ENCODE measurements at regions of chr16 and their contacts with region 1.

Region 1: DNA sequence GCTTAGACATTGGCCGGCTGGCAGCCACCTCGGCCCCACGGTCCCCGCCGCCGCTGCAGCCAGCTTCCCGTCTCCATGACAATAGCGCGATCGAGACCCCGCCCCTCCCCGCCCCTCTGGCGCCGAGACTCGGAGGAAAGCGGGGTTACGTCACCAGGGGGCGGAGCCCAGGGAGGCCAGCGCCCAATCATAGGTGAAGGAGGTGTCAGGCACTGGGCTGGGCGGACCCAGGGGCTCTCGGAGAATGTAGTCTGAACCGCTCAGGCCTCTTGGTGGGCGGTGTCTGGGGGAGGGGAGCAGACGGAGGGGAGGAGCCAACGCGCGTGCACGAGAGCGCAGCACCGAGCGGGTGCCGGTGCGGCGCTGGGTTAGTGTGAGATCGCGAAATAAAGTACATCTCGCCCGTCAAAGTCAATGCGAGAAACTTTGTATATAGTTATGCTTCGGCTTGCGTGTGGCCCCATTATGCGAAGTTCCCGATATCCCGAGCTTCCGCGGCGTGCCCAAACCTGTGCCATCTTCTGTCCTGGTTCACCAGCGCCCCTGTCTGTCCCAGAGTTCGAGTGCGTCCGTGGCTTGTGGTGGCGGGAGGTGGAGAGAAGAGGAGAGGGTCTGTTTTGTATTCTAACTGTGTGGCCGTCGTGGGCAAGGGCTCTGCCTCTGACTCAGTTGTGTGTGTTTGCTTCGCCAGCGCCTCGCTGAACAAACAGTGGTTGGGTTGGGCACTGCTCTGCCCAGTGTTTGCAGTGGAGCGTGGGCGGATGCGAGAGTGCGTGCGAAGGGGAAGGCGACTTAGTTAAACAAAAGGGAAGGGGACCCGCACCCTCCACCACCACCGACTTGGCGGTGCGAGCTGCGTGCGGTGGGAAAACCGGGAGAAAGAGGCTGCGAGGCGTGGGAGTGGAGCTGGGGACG is 1.3 kb upstream of the IRX5 start:
- DNase-seq: peak; percentile 88 to 98 (median 97)
- H3K4me3 ChIP-seq: peak overlapping the region; percentile 32 to 77 (median 61)
- H3K27ac ChIP-seq: peak overlapping the region in 11 of 59 donors; percentile 7 to 67 (median 37)
- H3K27me3 ChIP-seq: peaks cover 17 to 99% (median 89%) of the 10 kb centered on the region in 45 donors
- CTCF ChIP-seq: peak in 16 of 56 donors; percentile 3 to 48 (median 12)

Region 2: GRCh38 chr16:53773150-53773846 is 1156.0 kb before region 1 on chr16:
- intact Hi-C with region 1: loop called in 1 of 2 experiments (anchors 10 kb)
- DNase-seq: peak in 2 of 10 donors; percentile 18 to 34
- H3K4me3 ChIP-seq: no peak overlapping the region
- H3K27ac ChIP-seq: peak overlapping the region in 1 of 59 donors; percentile 20
- H3K27me3 ChIP-seq: no peaks in the 10 kb centered on the region
- CTCF ChIP-seq: peak; percentile 19 to 86 (median 66)

Region 3: GRCh38 chr16:53892155-53892554 is 1037.2 kb before region 1 on chr16:
- intact Hi-C with region 1: loop called in 1 of 2 experiments (anchors 10 kb)
- DNase-seq: peak in 7 of 10 donors; percentile 30 to 71 (median 48)
- H3K4me3 ChIP-seq: no peak overlapping the region
- H3K27ac ChIP-seq: no peak overlapping the region
- H3K27me3 ChIP-seq: no peaks in the 10 kb centered on the region
- CTCF ChIP-seq: peak; percentile 68 to 91 (median 82)

Region 4: DNA sequence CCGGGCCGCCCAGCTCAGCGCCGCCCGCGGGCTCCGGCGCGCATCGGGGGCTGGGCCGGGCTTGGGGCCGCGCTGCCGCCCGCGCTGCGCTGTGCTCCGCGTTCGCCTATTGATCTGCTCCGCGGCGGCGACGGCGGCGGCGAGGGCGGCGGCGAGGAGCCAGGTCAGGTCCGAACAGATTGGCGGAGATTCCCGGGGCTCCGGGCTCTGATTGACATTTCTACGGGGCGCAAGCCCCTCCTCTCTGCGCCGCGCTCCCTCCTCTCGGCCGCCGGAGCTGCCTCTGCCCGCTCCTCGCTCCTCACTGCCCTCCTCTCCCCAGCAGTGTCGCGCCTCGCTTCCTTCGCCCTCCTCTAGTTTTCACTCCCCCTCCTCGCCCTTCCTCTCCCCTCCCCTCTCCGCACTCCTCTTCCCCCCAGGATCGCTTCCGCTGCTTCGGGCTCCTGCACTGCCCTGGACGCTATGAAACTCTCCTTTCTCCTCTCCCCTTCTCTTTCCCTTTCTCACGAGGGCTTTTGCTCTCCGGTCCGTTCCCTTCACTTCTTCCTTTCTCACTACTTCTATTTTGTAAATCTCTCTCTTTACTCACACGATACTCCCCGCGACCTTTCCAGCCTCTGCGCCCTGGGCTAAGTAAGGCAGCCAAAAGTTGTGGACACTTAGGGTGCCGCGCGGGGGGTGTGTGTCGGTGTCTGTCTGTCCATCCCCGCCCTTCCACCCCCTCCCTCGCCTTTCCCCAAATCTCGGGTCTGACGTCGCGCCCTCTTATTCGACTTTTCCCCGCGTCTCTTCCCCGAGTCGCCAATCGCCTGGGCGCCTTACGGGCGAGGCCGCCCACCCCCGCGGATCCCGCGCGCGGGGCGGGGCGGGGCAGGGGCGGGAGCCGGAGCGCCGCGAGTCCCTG is 643.0 kb before region 1 on chr16 and contains the start of gene IRX3:
- intact Hi-C with region 1: loop called in 1 of 2 experiments (anchors 10 kb)
- DNase-seq: no peak
- H3K4me3 ChIP-seq: peak within 1 kb of the TSS in 58 of 59 donors; percentile 17 to 72 (median 44)
- H3K27ac ChIP-seq: no peak within 1 kb of the TSS
- H3K27me3 ChIP-seq: peaks cover 13 to 100% (median 97%) of the 10 kb centered on the region in 45 donors
- CTCF ChIP-seq: no peak
- total RNA-seq, gene IRX3: 0.16 to 2.1 (median 0.51) TPM in 30 of 120 experiments, not detected in the others

Region 5: GRCh38 chr16:54873071-54873470 is 56.3 kb before region 1 on chr16:
- intact Hi-C with region 1: no loop called
- DNase-seq: no peak
- H3K4me3 ChIP-seq: no peak overlapping the region
- H3K27ac ChIP-seq: no peak overlapping the region
- H3K27me3 ChIP-seq: peaks cover 0 to 27% (median 0%) of the 10 kb centered on the region in 45 donors
- CTCF ChIP-seq: no peak

Region 6: GRCh38 chr16:54901606-54902005 is 27.7 kb before region 1 on chr16:
- intact Hi-C with region 1: no loop called
- DNase-seq: no peak
- H3K4me3 ChIP-seq: no peak overlapping the region
- H3K27ac ChIP-seq: no peak overlapping the region
- H3K27me3 ChIP-seq: peaks cover 0 to 8% (median 0%) of the 10 kb centered on the region in 45 donors
- CTCF ChIP-seq: no peak

Region 7: DNA sequence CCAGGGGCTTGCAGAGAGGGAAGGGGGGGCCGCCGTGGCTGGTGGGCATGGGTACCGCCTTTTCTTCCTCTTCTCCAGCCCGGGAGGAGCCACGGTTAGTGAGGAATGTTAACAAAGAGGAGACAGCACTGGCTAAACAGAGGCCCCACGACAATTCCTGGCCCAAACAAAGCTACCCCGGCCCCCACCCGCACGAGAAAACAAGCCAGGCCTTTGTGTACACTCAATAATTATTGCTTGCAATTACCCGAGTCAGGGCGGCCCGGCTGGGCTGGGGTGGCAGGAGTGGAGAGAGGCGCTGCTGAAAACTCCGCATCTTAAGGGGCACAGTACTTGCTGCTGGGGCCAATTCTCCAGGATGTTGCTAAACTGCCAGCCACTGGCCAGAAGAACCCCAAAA is 57.7 kb after region 1 on chr16:
- intact Hi-C with region 1: loop called in 1 of 2 experiments (anchors 2 kb)
- DNase-seq: peak in 9 of 10 donors; percentile 48 to 80 (median 65)
- H3K4me3 ChIP-seq: peak overlapping the region in 29 of 59 donors; percentile 2 to 51 (median 26)
- H3K27ac ChIP-seq: peak overlapping the region in 56 of 59 donors; percentile 18 to 91 (median 76)
- H3K27me3 ChIP-seq: peaks cover 0 to 10% (median 0%) of the 10 kb centered on the region in 45 donors
- CTCF ChIP-seq: peak in 1 of 56 donors; percentile 11

Measured in dorsolateral prefrontal cortex (tissue), 120 donors.